ENCODE measurements at regions of chr19 and their contacts with region 1.

Region 1: GRCh38 chr19:40165362-40165937 is 25.8 kb upstream of the MAP3K10 start:
- H3K4me3 ChIP-seq: no peak overlapping the region
- H3K27ac ChIP-seq: no peak overlapping the region
- H3K4me1 ChIP-seq: 0 out of 2 replicates have a peak, but pooled peaks cover 2% of the 10 kb centered on the region
- CTCF ChIP-seq: peak; percentile 80

Region 2: DNA sequence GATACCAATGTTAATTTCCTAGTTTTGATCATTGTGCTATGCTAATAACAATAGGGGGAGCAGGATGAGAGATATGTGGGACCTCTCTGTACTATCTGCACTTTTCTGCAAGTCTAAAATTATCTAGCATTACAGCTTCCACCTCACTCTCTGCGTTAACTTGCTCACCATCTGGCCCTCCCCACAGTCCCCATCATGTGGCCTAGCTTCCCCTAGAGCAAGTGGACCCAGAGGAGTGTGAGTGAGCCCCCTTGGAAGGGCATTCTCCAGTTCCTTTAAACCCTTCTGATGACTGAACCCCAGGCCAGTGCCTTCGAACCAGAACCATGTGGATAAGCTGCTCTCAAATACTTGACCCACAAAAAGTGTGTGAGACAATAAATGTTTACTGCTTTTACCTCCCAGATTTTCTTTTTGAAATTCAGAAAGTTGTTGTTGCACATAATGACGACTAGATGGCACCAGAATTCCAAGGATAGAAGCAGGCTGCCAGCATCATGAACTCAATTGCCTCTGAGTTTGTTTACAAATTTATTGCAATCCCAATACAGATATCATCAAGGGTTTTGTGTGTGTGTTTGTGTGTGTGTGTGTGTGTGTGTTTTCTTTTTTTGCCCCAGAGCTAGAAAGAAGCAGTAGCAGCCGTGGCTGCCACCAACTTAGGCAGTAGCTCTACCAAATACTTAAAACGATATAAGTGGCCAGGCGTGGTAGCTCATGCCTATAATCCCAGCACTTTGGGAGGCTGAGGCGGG is 25.7 kb before region 1 on chr19:
- CTCF ChIA-PET with region 1: interaction called, 37 read pairs
- POLR2A ChIA-PET with region 1: no interaction called
- H3K4me3 ChIP-seq: no peak overlapping the region
- H3K27ac ChIP-seq: no peak overlapping the region
- H3K4me1 ChIP-seq: no peaks in the 10 kb centered on the region
- CTCF ChIP-seq: peak; percentile 89

Region 3: DNA sequence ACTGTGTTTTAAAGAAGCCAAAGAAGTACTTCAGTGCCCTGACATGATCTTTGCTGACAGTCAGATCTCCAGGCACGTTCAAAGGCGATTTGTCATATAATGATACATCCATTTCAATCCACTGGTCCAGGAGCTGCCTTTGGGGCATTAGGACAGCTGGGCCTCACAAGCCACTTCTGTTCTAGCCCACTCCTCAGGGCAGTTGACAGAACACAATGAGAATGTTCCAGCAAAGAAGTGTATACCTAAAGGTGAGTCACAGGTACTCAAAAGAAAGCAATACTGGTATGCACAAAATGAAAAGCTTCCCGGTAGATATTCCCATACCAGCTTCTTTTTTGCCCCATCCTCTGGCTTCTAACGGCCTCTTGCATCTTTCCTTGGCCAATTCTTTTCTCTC is 13.3 kb after region 1 on chr19:
- CTCF ChIA-PET with region 1: interaction called, 77 read pairs
- POLR2A ChIA-PET with region 1: interaction called, 5 read pairs
- H3K4me3 ChIP-seq: no peak overlapping the region
- H3K27ac ChIP-seq: no peak overlapping the region
- H3K4me1 ChIP-seq: no peaks in the 10 kb centered on the region
- CTCF ChIP-seq: no peak

Region 4: GRCh38 chr19:40208602-40209001 is 43.2 kb after region 1 on chr19:
- CTCF ChIA-PET with region 1: interaction called, 10 read pairs
- POLR2A ChIA-PET with region 1: interaction called, 3 read pairs
- H3K4me3 ChIP-seq: no peak overlapping the region
- H3K27ac ChIP-seq: peak overlapping the region; percentile 37; the same call in 1 of the 2 replicates
- H3K4me1 ChIP-seq: peaks cover 6% of the 10 kb centered on the region; the same call in 1 of the 2 replicates
- CTCF ChIP-seq: no peak

Region 5: DNA sequence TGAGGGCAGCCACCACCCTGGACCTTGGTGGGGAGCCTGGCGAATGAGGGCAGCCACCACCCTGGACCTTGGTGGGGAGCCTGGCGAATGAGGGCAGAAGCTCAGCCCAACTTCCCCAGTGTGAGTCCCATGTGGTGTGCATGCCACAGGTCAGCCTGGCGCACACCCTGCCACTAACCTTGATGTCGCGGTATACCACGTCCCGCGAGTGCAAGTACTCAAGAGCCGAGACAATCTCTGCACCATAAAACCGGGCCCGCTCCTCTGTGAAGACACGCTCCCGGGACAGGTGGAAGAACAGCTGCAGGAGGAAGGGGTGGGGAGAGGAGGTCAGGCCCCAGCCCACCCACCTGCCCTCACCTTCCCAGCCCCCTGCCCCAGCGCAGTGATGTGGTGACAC is 72.3 kb after region 1 on chr19:
- CTCF ChIA-PET with region 1: no interaction called
- POLR2A ChIA-PET with region 1: no interaction called
- H3K4me3 ChIP-seq: no peak overlapping the region
- H3K27ac ChIP-seq: no peak overlapping the region
- H3K4me1 ChIP-seq: no peaks in the 10 kb centered on the region
- CTCF ChIP-seq: no peak

Region 6: DNA sequence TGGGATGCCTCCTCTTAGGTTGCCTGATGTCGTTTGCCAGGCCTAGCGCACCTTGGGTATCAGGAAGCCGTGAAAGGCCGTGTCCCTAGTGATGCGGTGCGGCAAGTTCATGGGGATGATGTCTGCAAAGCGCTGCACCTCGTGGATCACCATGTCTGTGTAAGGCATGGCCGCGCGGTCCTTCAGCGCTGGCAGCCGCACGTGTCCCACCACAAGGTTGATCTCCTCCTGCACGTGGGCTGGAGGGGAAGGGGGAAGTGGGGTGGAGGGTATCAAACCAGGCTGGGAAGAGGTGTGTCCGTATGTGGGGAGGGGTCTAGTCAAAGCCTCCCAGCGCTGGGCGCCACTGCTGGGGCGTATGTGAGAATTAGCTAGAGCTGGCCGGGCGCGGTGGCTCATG is 656.7 kb after region 1 on chr19:
- CTCF ChIA-PET with region 1: no interaction called
- POLR2A ChIA-PET with region 1: no interaction called
- H3K4me3 ChIP-seq: no peak overlapping the region
- H3K27ac ChIP-seq: peak overlapping the region; percentile 54; the same call in 1 of the 2 replicates
- H3K4me1 ChIP-seq: peaks cover 20% of the 10 kb centered on the region
- CTCF ChIP-seq: no peak